HepG2 (cell line): ENCODE measurements at regions of chr3 and their contacts with region 1.

Region 1: GRCh38 chr3:193711964-193712598 is 119.1 kb downstream of the OPA1 start:
- DNase-seq: peak; percentile 99
- ATAC-seq: peak; percentile 97
- H3K4me3 ChIP-seq: peak overlapping the region; percentile 4 to 26 (median 7); a peak in 3 of 6 replicates
- H3K27ac ChIP-seq: peak overlapping the region; percentile 86
- H3K4me1 ChIP-seq: peaks cover 67% of the 10 kb centered on the region
- H3K27me3 ChIP-seq: no peaks in the 10 kb centered on the region
- CTCF ChIP-seq: peak; percentile 31; the same call in 1 of the 2 replicates
- EP300 ChIP-seq: peak; percentile 97 to 99
- POLR2A ChIP-seq: peak; percentile 5 to 37; a peak in 1 of 4 replicates
- RAD21 ChIP-seq: no peak

Region 2: GRCh38 chr3:193665370-193665989 is 46.6 kb before region 1 on chr3:
- CTCF ChIA-PET with region 1: no interaction called
- POLR2A ChIA-PET with region 1: interaction called, 3 read pairs
- in situ Hi-C with region 1: no loop called
- intact Hi-C with region 1: loop called (anchors 2 kb)
- DNase-seq: peak; percentile 25
- ATAC-seq: no peak
- H3K4me3 ChIP-seq: no peak overlapping the region
- H3K27ac ChIP-seq: no peak overlapping the region
- H3K4me1 ChIP-seq: peaks cover 14% of the 10 kb centered on the region; the same call in 1 of the 2 replicates
- H3K27me3 ChIP-seq: no peaks in the 10 kb centered on the region
- CTCF ChIP-seq: peak; percentile 34
- EP300 ChIP-seq: no peak
- POLR2A ChIP-seq: no peak
- RAD21 ChIP-seq: no peak

Region 3: DNA sequence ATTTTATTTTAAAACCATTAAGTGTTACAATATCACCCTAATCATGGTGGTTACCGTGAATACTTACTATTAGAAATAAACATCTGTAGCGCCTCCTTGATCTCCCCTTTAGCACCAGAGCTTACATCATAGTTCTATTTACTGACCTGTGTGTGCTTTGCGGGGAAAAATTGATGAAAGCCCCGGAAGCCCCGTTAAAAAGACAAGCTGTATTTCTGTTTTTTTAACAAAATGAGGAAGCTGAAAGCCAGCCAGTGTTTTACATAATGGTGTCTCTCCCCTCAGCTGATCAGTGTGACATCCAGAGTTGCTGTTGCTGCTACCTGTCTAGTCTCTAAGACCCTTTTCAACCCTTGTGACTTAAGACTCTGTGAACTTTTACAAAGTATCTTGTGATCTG is 18.3 kb before region 1 on chr3:
- CTCF ChIA-PET with region 1: no interaction called
- POLR2A ChIA-PET with region 1: interaction called, 10 read pairs
- in situ Hi-C with region 1: no loop called
- intact Hi-C with region 1: no loop called
- DNase-seq: peak; percentile 63
- ATAC-seq: peak; percentile 30; the same call in 1 of the 3 replicates
- H3K4me3 ChIP-seq: no peak overlapping the region
- H3K27ac ChIP-seq: peak overlapping the region; percentile 40
- H3K4me1 ChIP-seq: peaks cover 22% of the 10 kb centered on the region
- H3K27me3 ChIP-seq: no peaks in the 10 kb centered on the region
- CTCF ChIP-seq: no peak
- EP300 ChIP-seq: peak in 1 of 2 experiments; percentile 77; a peak in 1 of 4 replicates
- POLR2A ChIP-seq: no peak
- RAD21 ChIP-seq: no peak

Region 4: GRCh38 chr3:193732391-193732790 is 20.3 kb after region 1 on chr3:
- CTCF ChIA-PET with region 1: no interaction called
- POLR2A ChIA-PET with region 1: interaction called, 27 read pairs
- in situ Hi-C with region 1: no loop called
- intact Hi-C with region 1: loop called (anchors 1 kb)
- DNase-seq: peak; percentile 89
- ATAC-seq: peak; percentile 93
- H3K4me3 ChIP-seq: peak overlapping the region in 1 of 3 experiments; percentile 31; a peak in 1 of 6 replicates
- H3K27ac ChIP-seq: peak overlapping the region; percentile 21
- H3K4me1 ChIP-seq: peaks cover 59% of the 10 kb centered on the region
- H3K27me3 ChIP-seq: peaks cover 0 to 1% of the 10 kb centered on the region in 2 experiments; a peak in 1 of 5 replicates
- CTCF ChIP-seq: no peak
- EP300 ChIP-seq: peak in 1 of 2 experiments; percentile 74; a peak in 2 of 4 replicates
- POLR2A ChIP-seq: no peak
- RAD21 ChIP-seq: no peak

Region 5: GRCh38 chr3:193743702-193744047 is 31.6 kb after region 1 on chr3:
- CTCF ChIA-PET with region 1: no interaction called
- POLR2A ChIA-PET with region 1: interaction called, 61 read pairs
- in situ Hi-C with region 1: no loop called
- intact Hi-C with region 1: loop called (anchors 1 kb)
- DNase-seq: no peak
- ATAC-seq: peak; percentile 56; the same call in 2 of the 3 replicates
- H3K4me3 ChIP-seq: peak overlapping the region; percentile 41 to 74 (median 46)
- H3K27ac ChIP-seq: peak overlapping the region; percentile 97
- H3K4me1 ChIP-seq: peaks cover 40% of the 10 kb centered on the region
- H3K27me3 ChIP-seq: no peaks in the 10 kb centered on the region
- CTCF ChIP-seq: peak; percentile 24; the same call in 1 of the 2 replicates
- EP300 ChIP-seq: no peak
- POLR2A ChIP-seq: 0 out of 4 replicates have a peak, but pooled peaks of 1 of the 2 experiments have one; percentile 46
- RAD21 ChIP-seq: no peak

Region 6: GRCh38 chr3:193768070-193768394 is 56.0 kb after region 1 on chr3:
- CTCF ChIA-PET with region 1: no interaction called
- POLR2A ChIA-PET with region 1: no interaction called
- in situ Hi-C with region 1: no loop called
- intact Hi-C with region 1: no loop called
- DNase-seq: no peak
- ATAC-seq: no peak
- H3K4me3 ChIP-seq: no peak overlapping the region
- H3K27ac ChIP-seq: no peak overlapping the region
- H3K4me1 ChIP-seq: peaks cover 30% of the 10 kb centered on the region
- H3K27me3 ChIP-seq: no peaks in the 10 kb centered on the region
- CTCF ChIP-seq: no peak
- EP300 ChIP-seq: no peak
- POLR2A ChIP-seq: no peak
- RAD21 ChIP-seq: no peak

Region 7: DNA sequence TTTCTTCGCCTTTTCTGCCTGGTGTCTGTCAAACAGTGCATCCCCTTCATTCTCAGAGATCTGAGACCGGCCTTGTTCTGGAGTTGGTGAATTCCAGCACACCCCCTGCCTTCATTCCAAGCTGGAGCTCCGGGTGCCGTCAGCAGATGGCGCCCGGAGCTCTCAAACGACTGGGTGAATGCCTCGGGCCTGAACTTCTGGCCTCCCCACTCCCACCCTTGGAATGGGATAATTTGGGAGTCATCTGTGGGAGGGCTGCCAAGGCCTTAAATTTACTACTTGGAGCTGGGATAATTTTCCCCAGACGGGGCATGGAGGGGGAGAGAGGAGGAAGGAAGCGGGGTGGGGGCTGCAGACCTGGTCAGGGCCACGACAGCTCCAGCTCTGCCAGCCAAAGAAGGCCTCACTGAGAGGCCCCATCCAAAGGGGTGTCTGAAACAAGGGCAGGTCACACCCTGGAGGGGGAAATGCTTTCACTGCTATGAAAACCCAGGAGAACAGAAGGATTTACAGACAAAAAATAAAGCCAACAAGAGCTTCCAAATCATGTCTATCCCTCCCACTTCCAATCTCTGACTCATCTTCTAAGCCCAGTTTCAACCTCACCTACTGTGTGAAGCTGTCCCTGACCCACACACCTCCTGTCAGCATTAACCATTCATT is 68.9 kb after region 1 on chr3:
- CTCF ChIA-PET with region 1: no interaction called
- POLR2A ChIA-PET with region 1: no interaction called
- in situ Hi-C with region 1: no loop called
- intact Hi-C with region 1: loop called (anchors 5 kb)
- DNase-seq: peak; percentile 44
- ATAC-seq: peak; percentile 88
- H3K4me3 ChIP-seq: no peak overlapping the region; a peak in 1 of 6 replicates
- H3K27ac ChIP-seq: no peak overlapping the region
- H3K4me1 ChIP-seq: peaks cover 72% of the 10 kb centered on the region
- H3K27me3 ChIP-seq: peaks cover 0 to 20% of the 10 kb centered on the region in 2 experiments; a peak in 4 of 5 replicates
- CTCF ChIP-seq: peak; percentile 79
- EP300 ChIP-seq: no peak
- POLR2A ChIP-seq: no peak
- RAD21 ChIP-seq: peak; percentile 89